Stomach (tissue), 19 donors: ENCODE measurements at regions of chr11 and their contacts with region 1.

Region 1: GRCh38 chr11:96213500-96213899 is 129.5 kb downstream of the MAML2 start:
- DNase-seq: no peak
- H3K4me3 ChIP-seq: no peak overlapping the region
- H3K27ac ChIP-seq: peak overlapping the region in 4 of 5 donors; percentile 63 to 86 (median 65)
- H3K4me1 ChIP-seq: peaks cover 15 to 64% (median 38%) of the 10 kb centered on the region in 4 donors
- H3K27me3 ChIP-seq: no peaks in the 10 kb centered on the region
- CTCF ChIP-seq: no peak
- EP300 ChIP-seq: no peak
- POLR2A ChIP-seq: no peak

Region 2: GRCh38 chr11:96112201-96113128 is 101.0 kb before region 1 on chr11:
- intact Hi-C with region 1: no loop called
- DNase-seq: no peak
- H3K4me3 ChIP-seq: no peak overlapping the region
- H3K27ac ChIP-seq: peak overlapping the region in 3 of 5 donors; percentile 64 to 68 (median 67)
- H3K4me1 ChIP-seq: peaks cover 0 to 29% (median 15%) of the 10 kb centered on the region in 4 donors
- H3K27me3 ChIP-seq: no peaks in the 10 kb centered on the region
- CTCF ChIP-seq: no peak
- EP300 ChIP-seq: no peak
- POLR2A ChIP-seq: no peak

Region 3: DNA sequence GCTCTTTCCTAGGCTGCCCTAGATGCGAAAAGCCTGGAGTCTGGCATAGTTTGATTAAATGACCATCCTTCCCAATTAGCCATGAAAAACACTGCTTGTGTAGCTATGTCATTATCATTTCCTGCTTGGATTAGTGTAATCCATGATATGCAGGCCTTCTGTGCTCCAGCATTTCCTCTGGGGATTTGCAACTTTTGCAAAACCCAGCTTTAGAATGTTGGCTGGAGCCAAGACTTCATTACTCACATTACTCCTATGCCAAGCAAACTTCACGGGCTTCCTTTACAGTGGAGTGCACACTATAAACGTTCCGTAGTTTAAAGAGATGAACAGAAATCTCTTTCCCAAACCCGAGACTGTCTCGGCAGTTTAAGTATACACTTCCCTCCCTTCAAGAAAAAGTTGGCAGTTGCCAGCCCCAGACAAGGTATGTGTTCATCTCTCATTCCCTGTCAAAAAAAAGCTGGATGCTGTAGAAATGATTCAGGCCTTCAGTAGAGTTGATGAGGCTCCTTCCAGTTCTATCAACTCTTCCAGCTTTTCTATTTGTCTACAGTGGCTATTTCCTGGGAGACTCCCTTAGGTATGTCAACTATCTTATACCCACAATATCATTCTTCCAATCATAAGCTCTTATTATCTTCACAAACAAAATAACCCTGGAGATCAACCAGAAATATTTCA is 50.5 kb before region 1 on chr11:
- intact Hi-C with region 1: loop called (anchors 5 kb)
- DNase-seq: peak in 1 of 2 donors; percentile 88
- H3K4me3 ChIP-seq: no peak overlapping the region
- H3K27ac ChIP-seq: peak overlapping the region in 4 of 5 donors; percentile 50 to 69 (median 66)
- H3K4me1 ChIP-seq: peaks cover 0 to 17% (median 5%) of the 10 kb centered on the region in 4 donors
- H3K27me3 ChIP-seq: no peaks in the 10 kb centered on the region
- CTCF ChIP-seq: no peak
- EP300 ChIP-seq: no peak
- POLR2A ChIP-seq: no peak

Region 4: GRCh38 chr11:96279018-96279895 is 65.8 kb after region 1 on chr11:
- intact Hi-C with region 1: no loop called
- DNase-seq: no peak
- H3K4me3 ChIP-seq: no peak overlapping the region
- H3K27ac ChIP-seq: no peak overlapping the region
- H3K4me1 ChIP-seq: peaks cover 0 to 37% (median 19%) of the 10 kb centered on the region in 4 donors
- H3K27me3 ChIP-seq: no peaks in the 10 kb centered on the region
- CTCF ChIP-seq: no peak
- EP300 ChIP-seq: no peak
- POLR2A ChIP-seq: no peak